PC-9 (cell line): ENCODE measurements at regions of chr5 and their contacts with region 1.

Region 1: GRCh38 chr5:43313035-43313853 is at the start of gene HMGCS1:
- DNase-seq: peak; percentile 100
- H3K4me3 ChIP-seq: peak within 1 kb of the TSS; percentile 72
- H3K27ac ChIP-seq: peak within 1 kb of the TSS; percentile 73
- H3K4me1 ChIP-seq: peaks cover 66% of the 10 kb centered on the region
- H3K27me3 ChIP-seq: no peaks in the 10 kb centered on the region
- CTCF ChIP-seq: peak; percentile 24; the same call in 1 of the 2 replicates
- total RNA-seq, gene HMGCS1: 152 and 189 TPM in 2 replicates

Region 2: GRCh38 chr5:41924872-41925554 is 1388.2 kb before region 1 on chr5 and contains the start of gene FBXO4:
- CTCF ChIA-PET with region 1: no interaction called
- POLR2A ChIA-PET with region 1: interaction called, 10 read pairs
- intact Hi-C with region 1: no loop called
- DNase-seq: peak; percentile 71 to 92
- H3K4me3 ChIP-seq: peak within 1 kb of the TSS; percentile 86
- H3K27ac ChIP-seq: peak within 1 kb of the TSS; percentile 18
- H3K4me1 ChIP-seq: peaks cover 23% of the 10 kb centered on the region
- H3K27me3 ChIP-seq: no peaks in the 10 kb centered on the region
- CTCF ChIP-seq: no peak; the same call in 1 of the 2 replicates
- total RNA-seq, gene FBXO4: 27.8 and 30.4 TPM in 2 replicates

Region 3: GRCh38 chr5:43066799-43067741 is 246.2 kb before region 1 on chr5:
- CTCF ChIA-PET with region 1: no interaction called
- POLR2A ChIA-PET with region 1: no interaction called
- intact Hi-C with region 1: loop called (anchors 2 kb)
- DNase-seq: peak; percentile 91 to 93
- H3K4me3 ChIP-seq: peak overlapping the region; percentile 75
- H3K27ac ChIP-seq: peak overlapping the region; percentile 84
- H3K4me1 ChIP-seq: peaks cover 27% of the 10 kb centered on the region
- H3K27me3 ChIP-seq: no peaks in the 10 kb centered on the region
- CTCF ChIP-seq: no peak

Region 4: GRCh38 chr5:43389679-43390329 is 76.6 kb after region 1 on chr5:
- CTCF ChIA-PET with region 1: interaction called, 6 read pairs
- POLR2A ChIA-PET with region 1: no interaction called
- intact Hi-C with region 1: loop called (anchors 2 kb)
- DNase-seq: peak; percentile 73 to 91
- H3K4me3 ChIP-seq: no peak overlapping the region
- H3K27ac ChIP-seq: no peak overlapping the region
- H3K4me1 ChIP-seq: 0 out of 2 replicates have a peak, but pooled peaks cover 5% of the 10 kb centered on the region
- H3K27me3 ChIP-seq: no peaks in the 10 kb centered on the region
- CTCF ChIP-seq: peak; percentile 99

Region 5: DNA sequence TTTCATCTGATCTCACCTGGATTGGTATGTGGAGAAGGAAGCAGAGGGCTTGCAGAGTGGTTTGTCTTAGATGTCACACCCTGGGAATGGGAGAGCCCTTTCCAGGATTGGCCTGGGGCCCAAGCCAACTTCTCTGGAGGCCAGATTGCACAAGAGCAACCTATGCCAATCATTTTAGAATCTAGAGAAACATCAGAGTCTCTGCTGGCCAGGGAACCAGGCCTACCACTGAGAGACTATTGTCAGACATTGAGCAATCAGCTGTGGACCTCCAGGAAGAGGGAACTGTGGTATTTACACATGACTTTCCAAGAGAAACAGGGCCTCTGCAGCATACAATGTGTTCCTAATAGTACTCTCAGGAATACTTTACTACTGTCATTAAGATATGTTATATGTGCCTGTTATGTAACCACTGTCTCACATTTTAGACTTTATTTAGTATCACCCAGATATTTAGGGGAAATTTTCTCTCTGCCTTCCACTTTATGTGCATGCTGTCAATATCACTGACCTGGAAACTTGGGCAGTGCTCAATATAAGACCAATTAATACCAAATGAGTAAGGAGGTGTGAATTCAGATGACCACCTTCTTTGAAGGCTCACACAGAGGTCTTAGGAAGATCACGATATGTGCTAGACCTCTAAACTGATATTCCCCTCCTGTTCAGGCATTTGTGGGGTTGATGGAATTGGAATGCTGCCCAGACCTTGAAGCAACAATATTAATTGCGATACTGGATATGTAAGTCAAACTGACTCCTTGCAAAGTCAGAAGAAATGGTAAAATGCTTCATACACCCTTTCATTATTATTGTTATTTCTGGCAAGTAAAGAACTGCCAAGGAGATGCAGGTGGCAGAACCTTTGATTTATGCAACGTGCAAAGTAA is 119.5 kb after region 1 on chr5:
- CTCF ChIA-PET with region 1: no interaction called
- POLR2A ChIA-PET with region 1: interaction called, 4 read pairs
- intact Hi-C with region 1: loop called (anchors 1 kb)
- DNase-seq: peak; percentile 98 to 99
- H3K4me3 ChIP-seq: no peak overlapping the region
- H3K27ac ChIP-seq: peak overlapping the region; percentile 69
- H3K4me1 ChIP-seq: peaks cover 45% of the 10 kb centered on the region
- H3K27me3 ChIP-seq: no peaks in the 10 kb centered on the region
- CTCF ChIP-seq: no peak

Region 6: GRCh38 chr5:43556857-43557542 is 243.8 kb after region 1 on chr5 and contains the start of gene PAIP1:
- CTCF ChIA-PET with region 1: no interaction called
- POLR2A ChIA-PET with region 1: interaction called, 3 read pairs
- intact Hi-C with region 1: loop called (anchors 1 kb)
- DNase-seq: peak; percentile 86 to 98
- H3K4me3 ChIP-seq: peak within 1 kb of the TSS; percentile 88
- H3K27ac ChIP-seq: peak within 1 kb of the TSS; percentile 76
- H3K4me1 ChIP-seq: peaks cover 34% of the 10 kb centered on the region
- H3K27me3 ChIP-seq: no peaks in the 10 kb centered on the region
- CTCF ChIP-seq: peak; percentile 71
- total RNA-seq, gene PAIP1: 183 and 191 TPM in 2 replicates

Region 7: GRCh38 chr5:43772764-43773477 is 459.7 kb after region 1 on chr5:
- CTCF ChIA-PET with region 1: no interaction called
- POLR2A ChIA-PET with region 1: no interaction called
- intact Hi-C with region 1: loop called (anchors 5 kb)
- DNase-seq: no peak
- H3K4me3 ChIP-seq: no peak overlapping the region
- H3K27ac ChIP-seq: peak overlapping the region; percentile 45
- H3K4me1 ChIP-seq: peaks cover 15% of the 10 kb centered on the region
- H3K27me3 ChIP-seq: no peaks in the 10 kb centered on the region
- CTCF ChIP-seq: no peak